OCI-LY7 (cell line): ENCODE measurements at regions of chr5 and their contacts with region 1.

Region 1: DNA sequence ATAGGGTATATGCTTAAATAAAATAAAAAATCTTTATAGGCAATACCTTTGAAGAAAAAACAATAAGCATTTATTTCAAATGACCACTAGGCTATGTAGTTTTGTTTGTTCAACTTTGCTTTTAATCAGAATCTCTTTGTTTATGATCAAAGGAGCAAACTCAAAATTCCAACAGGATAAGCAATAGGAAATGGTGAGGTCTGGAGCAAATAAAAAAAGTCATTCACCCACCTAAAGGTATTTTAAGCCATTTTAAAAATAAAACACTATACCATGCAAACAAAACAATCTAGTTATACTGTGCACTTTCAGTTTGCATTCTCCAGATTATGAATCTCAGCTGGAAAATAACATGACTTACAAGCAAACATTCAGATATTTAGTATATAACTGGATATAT is 35.3 kb upstream of the CYFIP2 start:
- DNase-seq: no peak
- H3K4me3 ChIP-seq: no peak overlapping the region
- H3K27ac ChIP-seq: no peak overlapping the region
- H3K4me1 ChIP-seq: no peaks in the 10 kb centered on the region
- CTCF ChIP-seq: 0 out of 2 replicates have a peak, but pooled peaks have one; percentile 16

Region 2: DNA sequence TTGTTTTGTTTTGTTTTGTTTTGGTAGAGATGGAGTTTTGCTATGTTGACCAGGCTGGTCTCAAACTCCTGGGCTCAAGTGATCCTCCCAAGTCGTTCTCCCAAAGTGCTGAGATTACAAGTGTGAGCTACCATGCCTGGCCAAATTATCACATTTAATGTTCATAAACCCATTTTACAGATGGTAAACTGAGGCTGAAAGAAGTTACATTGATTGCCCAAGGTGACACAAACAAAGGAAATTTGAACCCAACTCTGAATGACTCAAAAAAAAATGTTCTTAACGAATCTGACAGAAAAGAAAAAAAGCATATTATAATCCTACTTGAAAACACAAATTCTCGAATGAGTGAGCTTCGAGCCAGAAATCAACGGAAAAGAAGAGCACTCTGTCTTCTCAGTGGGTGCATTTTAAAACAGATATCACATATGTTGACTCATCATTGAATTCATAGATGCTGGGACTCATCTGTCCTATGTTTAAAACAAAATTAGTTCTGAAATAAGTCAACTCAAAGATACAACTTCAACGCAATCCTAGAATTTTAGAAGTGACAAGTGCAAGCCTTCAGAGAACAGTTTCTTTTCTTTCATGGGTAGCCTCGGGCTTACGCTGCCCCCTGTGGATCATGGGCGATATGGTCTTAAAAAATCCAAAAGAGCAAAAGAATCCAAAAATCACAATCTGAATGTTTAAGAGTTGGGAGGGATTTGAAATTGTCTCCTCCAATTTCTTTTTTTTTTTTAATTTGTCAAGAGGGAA is 296.0 kb before region 1 on chr5:
- CTCF ChIA-PET with region 1: no interaction called
- POLR2A ChIA-PET with region 1: no interaction called
- intact Hi-C with region 1: no loop called
- DNase-seq: peak; percentile 87
- H3K4me3 ChIP-seq: no peak overlapping the region
- H3K27ac ChIP-seq: peak overlapping the region; percentile 97
- H3K4me1 ChIP-seq: peaks cover 83% of the 10 kb centered on the region
- CTCF ChIP-seq: peak; percentile 100

Region 3: GRCh38 chr5:157187046-157187754 is 43.4 kb before region 1 on chr5:
- CTCF ChIA-PET with region 1: no interaction called
- POLR2A ChIA-PET with region 1: interaction called, 5 read pairs
- intact Hi-C with region 1: loop called (anchors 2 kb)
- DNase-seq: no peak
- H3K4me3 ChIP-seq: no peak overlapping the region
- H3K27ac ChIP-seq: no peak overlapping the region
- H3K4me1 ChIP-seq: no peaks in the 10 kb centered on the region
- CTCF ChIP-seq: no peak